A673 (cell line): ENCODE measurements at regions of chr7 and their contacts with region 1.

Region 1: GRCh38 chr7:158829342-158830210 is at the start of gene ESYT2:
- DNase-seq: peak; percentile 98
- H3K4me3 ChIP-seq: peak within 1 kb of the TSS; percentile 86
- H3K27ac ChIP-seq: peak within 1 kb of the TSS; percentile 96
- H3K4me1 ChIP-seq: peaks cover 16% of the 10 kb centered on the region
- H3K27me3 ChIP-seq: no peaks in the 10 kb centered on the region
- CTCF ChIP-seq: no peak
- total RNA-seq, gene ESYT2: 33.3 and 37.5 TPM in 2 replicates

Region 2: DNA sequence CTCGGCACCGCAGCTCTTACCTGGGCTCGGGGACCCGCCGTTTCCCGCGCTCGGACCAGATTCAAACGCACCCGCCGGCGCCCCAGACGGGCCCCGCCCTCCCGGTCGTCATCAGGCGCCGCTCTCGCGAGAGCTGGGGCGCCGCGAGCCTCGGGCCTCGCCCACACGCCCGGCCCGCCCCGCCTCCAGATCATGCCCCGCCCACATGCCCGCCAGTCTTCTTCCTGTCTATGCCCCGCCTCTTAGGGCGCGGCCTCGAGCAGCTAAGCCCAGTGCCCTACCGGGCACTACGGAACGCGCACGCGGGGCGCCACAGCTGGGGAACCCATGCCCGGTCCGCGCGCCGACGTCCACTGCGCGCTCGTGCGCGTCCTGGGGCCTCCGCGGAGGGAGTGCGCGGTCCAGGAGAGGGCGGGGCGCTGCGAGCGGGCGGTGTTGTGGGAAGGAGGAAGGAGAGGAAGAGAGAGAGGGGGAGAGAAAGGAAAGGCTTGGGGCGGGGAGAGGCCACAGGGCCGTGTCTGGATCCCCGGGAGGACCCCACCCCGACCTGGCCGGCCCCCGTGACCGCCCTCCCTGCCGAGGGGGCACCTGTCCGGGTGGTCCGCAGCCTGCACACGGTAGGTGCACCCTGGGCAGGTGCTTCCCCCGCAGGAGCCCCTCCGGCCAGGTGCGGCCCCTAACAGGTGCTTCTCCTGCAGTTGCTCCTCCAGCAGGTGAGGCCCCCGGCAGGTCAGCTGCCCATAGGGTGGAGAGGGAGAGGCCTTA is 124.7 kb before region 1 on chr7 and contains the start of gene NCAPG2:
- CTCF ChIA-PET with region 1: no interaction called
- POLR2A ChIA-PET with region 1: no interaction called
- intact Hi-C with region 1: loop called (anchors 2 kb)
- DNase-seq: peak; percentile 99
- H3K4me3 ChIP-seq: peak within 1 kb of the TSS; percentile 86
- H3K27ac ChIP-seq: peak within 1 kb of the TSS; percentile 98
- H3K4me1 ChIP-seq: peaks cover 21% of the 10 kb centered on the region
- H3K27me3 ChIP-seq: no peaks in the 10 kb centered on the region
- CTCF ChIP-seq: no peak
- total RNA-seq, gene NCAPG2: 127 and 129 TPM in 2 replicates

Region 3: DNA sequence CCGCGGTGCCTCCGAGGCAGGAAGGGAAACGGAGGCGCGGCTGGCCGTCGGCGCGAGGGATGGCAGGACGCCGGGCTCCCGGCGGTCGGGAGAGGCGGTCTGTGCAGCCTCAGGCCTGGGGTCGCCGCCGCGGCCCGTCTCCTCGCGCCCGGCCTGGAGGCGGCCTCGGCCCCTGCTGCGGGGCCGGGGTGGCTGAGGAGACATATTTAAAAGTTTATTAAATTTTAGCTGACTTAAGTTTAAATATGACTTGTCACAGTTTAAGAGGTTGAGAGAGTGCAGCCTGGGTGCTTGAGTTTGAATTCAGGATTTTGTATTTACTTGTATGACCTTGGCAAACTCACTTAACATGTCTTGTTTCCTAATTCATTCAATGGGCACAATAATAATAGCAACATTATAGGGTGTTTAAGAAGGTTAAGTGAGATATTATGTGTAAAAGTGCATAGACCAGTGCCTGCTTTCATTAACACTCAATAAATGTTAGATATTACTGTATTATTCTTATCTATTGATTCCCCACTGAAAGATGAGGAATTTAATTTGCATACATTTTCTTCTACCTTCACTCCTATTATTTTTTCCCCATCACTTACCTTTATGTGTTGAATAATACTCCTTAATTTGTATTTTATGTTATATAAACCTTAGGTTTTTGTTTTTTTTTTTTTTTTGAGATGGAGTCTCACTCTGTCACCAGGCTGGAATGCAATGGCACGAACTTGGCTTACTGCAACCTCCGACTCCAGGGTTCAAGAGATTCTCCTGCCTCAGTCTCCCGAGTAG is 27.5 kb after region 1 on chr7:
- CTCF ChIA-PET with region 1: no interaction called
- POLR2A ChIA-PET with region 1: no interaction called
- intact Hi-C with region 1: loop called (anchors 1 kb)
- DNase-seq: no peak
- H3K4me3 ChIP-seq: peak overlapping the region; percentile 92
- H3K27ac ChIP-seq: peak overlapping the region; percentile 82
- H3K4me1 ChIP-seq: peaks cover 7% of the 10 kb centered on the region
- H3K27me3 ChIP-seq: no peaks in the 10 kb centered on the region
- CTCF ChIP-seq: no peak

Region 4: GRCh38 chr7:159084069-159084801 is 254.7 kb after region 1 on chr7:
- CTCF ChIA-PET with region 1: no interaction called
- POLR2A ChIA-PET with region 1: no interaction called
- intact Hi-C with region 1: no loop called
- DNase-seq: no peak
- H3K4me3 ChIP-seq: no peak overlapping the region
- H3K27ac ChIP-seq: no peak overlapping the region
- H3K4me1 ChIP-seq: no peaks in the 10 kb centered on the region
- H3K27me3 ChIP-seq: no peaks in the 10 kb centered on the region
- CTCF ChIP-seq: no peak